Activated naive CD4-positive, alpha-beta T cell treated with anti-CD3 and anti-CD28 coated beads for 36 hours (primary cell): ENCODE measurements at regions of chr10 and their contacts with region 1.

Region 1: DNA sequence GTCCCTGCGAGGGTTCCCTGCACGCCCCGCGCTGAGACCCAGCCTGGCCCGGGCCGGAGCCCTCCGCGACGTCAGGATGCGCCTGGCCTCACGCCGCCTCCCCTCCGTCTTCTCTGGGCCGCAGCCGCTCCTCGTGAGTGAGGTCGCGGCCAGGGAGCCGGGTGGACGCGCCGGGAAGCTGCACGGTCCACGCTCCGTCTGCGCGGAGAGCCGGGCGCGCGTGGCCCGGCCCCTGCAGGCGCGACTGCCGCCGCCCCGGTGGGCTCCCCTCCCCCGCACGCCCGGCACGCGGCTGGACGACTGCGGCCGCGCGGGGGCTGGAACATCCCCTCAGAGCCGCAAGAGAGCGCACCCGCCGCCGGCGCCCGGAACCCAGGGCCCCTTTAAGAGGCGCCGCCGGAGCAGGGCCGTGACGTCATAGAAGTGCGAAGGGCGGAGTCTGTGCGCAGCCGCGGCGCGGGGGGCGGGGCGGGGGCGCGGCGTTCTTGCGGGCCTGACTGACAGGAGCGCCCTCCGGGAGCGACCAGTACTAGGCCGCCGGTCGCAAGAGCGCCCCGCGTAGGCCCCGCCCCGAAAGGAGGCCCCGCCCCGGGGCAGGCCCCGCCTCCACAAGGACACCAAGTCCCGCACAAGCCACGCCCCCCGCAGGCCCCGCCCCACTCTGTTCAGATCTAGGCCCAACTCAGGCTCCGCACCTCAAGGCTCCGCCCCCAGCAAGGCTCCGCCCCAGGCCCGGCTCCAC is 445 bp upstream of the INPP5A start:
- DNase-seq: peak; percentile 100
- H3K4me3 Mint-ChIP-seq: peak overlapping the region; percentile 64
- H3K27ac Mint-ChIP-seq: no peak overlapping the region
- H3K4me1 Mint-ChIP-seq: peaks cover 49% of the 10 kb centered on the region
- H3K27me3 Mint-ChIP-seq: peaks cover 1% of the 10 kb centered on the region

Region 2: DNA sequence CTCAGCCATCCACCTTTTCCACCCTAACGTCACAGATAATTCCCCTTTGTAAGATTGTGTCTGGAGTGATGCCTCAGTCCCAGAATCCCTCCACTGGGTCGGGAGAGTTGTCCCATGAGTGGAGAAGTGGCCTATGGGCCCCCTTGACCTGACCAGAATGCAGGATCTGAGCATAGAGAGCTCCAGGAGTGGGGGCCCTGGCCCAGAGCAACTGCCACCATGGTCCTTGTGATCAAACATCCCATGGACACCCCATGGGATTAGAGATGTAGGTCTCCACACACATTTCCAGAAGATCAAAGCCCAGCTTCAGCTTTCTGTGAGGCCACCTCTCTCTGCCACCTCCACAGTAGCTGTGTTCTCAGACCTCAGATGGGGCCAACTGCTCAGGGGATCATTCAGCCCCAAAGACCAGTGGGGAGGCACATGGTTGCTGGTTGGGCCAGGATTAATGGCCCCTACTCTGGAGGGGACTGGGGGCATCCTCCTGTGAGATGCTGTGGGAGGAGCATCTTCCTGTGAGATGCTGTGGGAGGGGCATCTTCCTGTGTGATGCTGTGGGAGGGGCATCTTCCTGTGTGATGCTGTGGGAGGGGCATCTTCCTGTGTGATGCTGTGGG is 378.9 kb before region 1 on chr10:
- CTCF ChIA-PET with region 1: no interaction called
- intact Hi-C with region 1: loop called (anchors 1 kb)
- DNase-seq: peak; percentile 46
- H3K4me3 Mint-ChIP-seq: peak overlapping the region; percentile 7
- H3K27ac Mint-ChIP-seq: peak overlapping the region; percentile 67
- H3K4me1 Mint-ChIP-seq: peaks cover 26% of the 10 kb centered on the region
- H3K27me3 Mint-ChIP-seq: no peaks in the 10 kb centered on the region

Region 3: GRCh38 chr10:132396495-132397035 is 140.6 kb before region 1 on chr10:
- CTCF ChIA-PET with region 1: no interaction called
- intact Hi-C with region 1: loop called (anchors 5 kb)
- DNase-seq: peak; percentile 65
- H3K4me3 Mint-ChIP-seq: no peak overlapping the region
- H3K27ac Mint-ChIP-seq: no peak overlapping the region
- H3K4me1 Mint-ChIP-seq: peaks cover 13% of the 10 kb centered on the region
- H3K27me3 Mint-ChIP-seq: no peaks in the 10 kb centered on the region

Region 4: GRCh38 chr10:132518572-132519381 is 18.4 kb before region 1 on chr10:
- CTCF ChIA-PET with region 1: no interaction called
- intact Hi-C with region 1: no loop called
- DNase-seq: peak; percentile 25
- H3K4me3 Mint-ChIP-seq: no peak overlapping the region
- H3K27ac Mint-ChIP-seq: no peak overlapping the region
- H3K4me1 Mint-ChIP-seq: peaks cover 4% of the 10 kb centered on the region
- H3K27me3 Mint-ChIP-seq: peaks cover 2% of the 10 kb centered on the region

Region 5: DNA sequence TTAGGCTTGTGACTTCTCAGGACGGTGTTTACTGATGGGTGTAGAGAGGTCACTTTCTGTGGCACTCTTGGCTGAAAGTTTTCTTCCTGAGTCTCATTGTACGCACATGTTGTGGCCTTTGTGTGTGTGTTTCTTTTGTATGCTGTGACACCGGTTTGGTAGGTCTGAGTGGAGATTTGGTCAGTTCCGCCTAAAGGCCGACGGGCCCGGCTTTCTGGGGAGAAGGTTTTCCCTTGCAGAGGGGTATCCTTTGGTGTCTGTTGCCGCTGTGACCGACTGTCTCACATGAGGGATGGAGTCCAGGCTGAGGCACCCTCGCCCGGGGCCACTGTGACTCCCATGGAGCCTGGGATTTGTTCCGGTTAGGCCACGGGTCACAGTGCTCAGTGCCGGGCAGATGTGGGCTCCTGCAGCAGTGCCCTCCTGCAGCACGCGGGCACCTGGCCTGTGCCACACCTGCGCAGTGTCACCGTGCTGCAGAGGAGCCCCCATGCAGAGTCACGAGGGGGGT is 19.8 kb after region 1 on chr10:
- CTCF ChIA-PET with region 1: no interaction called
- intact Hi-C with region 1: no loop called
- DNase-seq: no peak
- H3K4me3 Mint-ChIP-seq: no peak overlapping the region
- H3K27ac Mint-ChIP-seq: no peak overlapping the region
- H3K4me1 Mint-ChIP-seq: peaks cover 44% of the 10 kb centered on the region
- H3K27me3 Mint-ChIP-seq: no peaks in the 10 kb centered on the region

Region 6: DNA sequence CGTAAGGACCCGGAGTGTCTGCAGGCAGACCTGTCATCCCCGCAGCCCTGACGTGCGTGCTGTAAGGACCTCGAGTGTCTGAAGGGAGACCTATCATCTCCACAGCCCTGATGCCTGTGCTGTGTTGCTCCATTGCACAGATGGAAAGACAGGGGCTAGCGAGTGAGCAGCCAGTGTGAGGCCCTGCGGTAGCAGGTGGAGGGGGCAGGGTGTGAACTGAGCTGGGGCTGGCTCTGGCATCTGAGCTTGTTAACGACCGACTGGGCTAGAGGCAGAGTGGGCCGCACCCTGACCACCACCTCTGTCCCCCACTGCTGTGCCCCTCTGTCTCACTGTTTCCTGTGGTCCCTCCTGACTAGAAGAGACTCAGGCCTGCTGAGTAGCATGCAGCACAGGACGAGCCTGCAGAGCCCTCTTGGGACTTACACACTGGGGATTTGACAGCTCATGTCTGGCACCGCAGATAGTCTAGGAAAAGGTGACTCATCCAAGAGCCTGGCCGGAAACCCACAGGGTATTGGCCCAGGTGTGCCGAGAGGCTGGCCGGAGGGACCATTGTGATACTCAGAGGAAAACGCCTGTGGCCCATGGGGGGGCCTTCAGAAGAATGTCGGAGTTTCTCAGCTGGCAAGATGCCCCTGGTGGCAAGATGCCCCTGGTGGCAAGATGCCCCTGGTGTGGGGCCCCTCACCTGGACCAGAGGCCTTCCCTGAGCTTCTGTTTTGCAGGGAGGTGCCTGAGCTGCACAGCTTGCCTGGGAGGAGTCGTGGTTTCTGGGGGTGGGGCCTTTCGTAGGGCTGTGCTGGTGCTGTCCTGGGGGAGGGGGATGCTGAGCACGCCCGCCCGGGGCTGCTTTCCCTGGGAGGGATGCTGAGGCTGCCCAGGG is 34.8 kb after region 1 on chr10:
- CTCF ChIA-PET with region 1: interaction called, 8 read pairs
- intact Hi-C with region 1: loop called (anchors 1 kb)
- DNase-seq: peak; percentile 90
- H3K4me3 Mint-ChIP-seq: no peak overlapping the region
- H3K27ac Mint-ChIP-seq: no peak overlapping the region
- H3K4me1 Mint-ChIP-seq: peaks cover 5% of the 10 kb centered on the region
- H3K27me3 Mint-ChIP-seq: no peaks in the 10 kb centered on the region

Region 7: GRCh38 chr10:132961787-132962622 is 424.9 kb after region 1 on chr10:
- CTCF ChIA-PET with region 1: no interaction called
- intact Hi-C with region 1: loop called (anchors 5 kb)
- DNase-seq: peak; percentile 93
- H3K4me3 Mint-ChIP-seq: peak overlapping the region; percentile 67
- H3K27ac Mint-ChIP-seq: peak overlapping the region; percentile 84
- H3K4me1 Mint-ChIP-seq: peaks cover 23% of the 10 kb centered on the region
- H3K27me3 Mint-ChIP-seq: peaks cover 14% of the 10 kb centered on the region

Region 8: GRCh38 chr10:133394064-133394663 is 857.0 kb after region 1 on chr10 and contains the start of gene MTG1:
- CTCF ChIA-PET with region 1: no interaction called
- intact Hi-C with region 1: loop called (anchors 5 kb)
- DNase-seq: peak; percentile 94
- H3K4me3 Mint-ChIP-seq: peak within 1 kb of the TSS; percentile 96
- H3K27ac Mint-ChIP-seq: peak within 1 kb of the TSS; percentile 90
- H3K4me1 Mint-ChIP-seq: peaks cover 55% of the 10 kb centered on the region
- H3K27me3 Mint-ChIP-seq: no peaks in the 10 kb centered on the region
- total RNA-seq, gene MTG1: 31.6 to 32.9 TPM